Posterior cingulate gyrus (tissue), 11 donors: ENCODE measurements at regions of chr16 and their contacts with region 1.

Region 1: DNA sequence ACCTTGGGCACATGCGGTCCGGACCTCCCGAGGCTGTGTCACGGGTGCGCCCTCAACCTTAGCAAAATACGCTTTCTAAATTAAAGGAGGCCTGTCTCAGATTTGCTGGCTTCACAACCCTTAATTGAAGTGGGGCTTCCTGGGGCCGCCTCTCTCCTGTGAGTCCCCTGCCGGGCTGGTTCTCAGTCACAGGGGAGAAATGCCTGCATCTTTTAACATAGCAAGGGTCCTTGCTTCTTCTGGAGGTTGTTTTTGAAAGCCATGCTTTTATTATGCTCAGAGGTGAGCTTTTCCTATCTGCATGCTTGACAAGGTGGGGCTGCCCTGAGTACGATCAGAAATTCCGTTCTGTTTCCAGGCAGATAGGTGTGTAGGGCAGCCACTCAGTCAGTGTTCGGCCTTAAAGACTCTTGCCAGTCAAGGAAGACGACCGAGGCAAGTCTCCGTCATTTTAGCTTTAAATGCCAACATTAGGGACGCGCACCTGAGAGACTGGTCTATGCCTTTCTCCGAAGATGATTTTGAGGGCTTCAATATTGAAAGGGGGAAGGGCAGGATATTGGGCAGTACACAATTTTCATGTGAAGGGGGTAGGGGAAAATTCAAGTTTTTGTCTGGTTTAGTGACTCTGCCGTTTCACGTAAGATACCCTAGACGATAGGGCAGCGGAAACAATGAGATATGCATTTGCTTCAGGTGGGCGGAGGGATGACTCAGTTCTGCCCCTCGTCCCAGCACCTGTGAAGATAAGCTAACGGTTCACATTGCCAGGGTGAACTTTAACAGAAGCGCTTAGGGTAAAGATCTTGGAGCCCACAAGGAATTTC is 5.5 kb upstream of the SLC7A5 start:
- DNase-seq: no peak

Region 2: DNA sequence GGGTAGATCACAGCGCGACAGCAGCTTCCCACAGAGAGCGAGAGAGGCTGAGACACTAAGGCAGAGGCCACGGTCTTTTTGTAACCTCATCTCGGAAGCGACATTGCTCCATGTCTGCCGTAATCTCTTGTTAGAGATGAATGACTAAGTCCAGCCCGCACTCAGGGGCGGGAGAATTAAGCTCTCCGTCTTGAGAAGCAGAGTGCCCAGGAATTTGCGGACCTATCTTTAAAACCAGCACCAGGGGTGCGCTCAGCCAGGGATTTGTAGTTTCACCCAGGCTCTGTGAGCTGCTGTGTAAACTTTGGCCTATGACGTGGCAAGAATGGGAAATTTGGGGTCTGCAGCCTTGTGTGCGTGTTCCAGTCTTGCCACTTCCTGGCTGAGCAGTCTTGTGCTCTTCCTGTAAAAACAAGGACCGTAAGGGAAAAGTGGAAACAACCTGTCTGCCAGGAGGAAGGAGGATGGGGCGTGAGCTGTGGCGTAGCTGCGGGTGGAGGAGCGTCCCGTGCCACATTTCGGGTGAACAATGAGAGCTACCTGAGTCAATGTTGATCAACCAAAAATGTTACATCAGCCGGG is 288.6 kb before region 1 on chr16:
- intact Hi-C with region 1: loop called (anchors 5 kb)
- DNase-seq: peak in 1 of 10 donors; percentile 40

Region 3: GRCh38 chr16:87778830-87779579 is 95.8 kb before region 1 on chr16:
- intact Hi-C with region 1: loop called (anchors 1 kb)
- DNase-seq: peak; percentile 82 to 98 (median 92)

Region 4: GRCh38 chr16:87850009-87851006 is 24.5 kb before region 1 on chr16:
- intact Hi-C with region 1: loop called (anchors 2 kb)
- DNase-seq: peak in 8 of 10 donors; percentile 55 to 95 (median 69)